Lower lobe of right lung (tissue), 2 donors: ENCODE measurements at regions of chr4 and their contacts with region 1.

Region 1: DNA sequence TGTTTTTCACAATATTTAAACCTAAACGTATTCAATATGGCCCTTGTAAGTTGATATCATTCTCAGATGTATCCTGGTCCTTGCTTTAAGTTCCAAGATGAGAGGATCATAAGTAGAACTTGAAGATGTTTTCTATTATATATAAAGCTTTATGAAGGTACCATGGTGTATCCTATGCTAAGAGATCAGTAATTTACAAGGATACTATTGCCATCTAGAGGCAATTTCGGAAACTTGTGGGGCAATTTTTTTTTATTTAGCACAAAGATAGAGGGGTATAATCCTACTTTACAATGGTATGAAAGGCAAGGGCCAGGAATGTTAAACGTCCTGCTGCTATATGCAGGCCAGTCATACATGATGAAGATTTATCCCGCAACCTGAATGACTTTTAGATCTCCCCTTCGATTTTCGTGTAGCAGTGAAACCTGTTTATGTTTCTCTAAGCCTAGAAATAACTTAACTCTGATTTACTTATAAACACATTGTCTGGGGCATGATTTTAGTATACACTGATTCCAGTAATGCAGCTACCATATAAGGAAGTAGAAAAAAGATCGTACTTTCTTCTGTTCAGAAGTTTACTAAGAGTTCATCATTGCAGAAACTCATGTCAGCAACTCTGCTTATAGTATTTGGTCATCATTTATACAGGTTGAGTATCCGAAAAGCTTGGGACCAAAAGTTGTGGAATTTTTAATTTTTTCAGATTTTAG is 2.6 kb downstream of the SLC25A31 start:
- DNase-seq: no peak
- ATAC-seq: no peak
- H3K4me3 ChIP-seq: no peak overlapping the region
- H3K27ac ChIP-seq: no peak overlapping the region
- H3K4me1 ChIP-seq: no peaks in the 10 kb centered on the region
- H3K27me3 ChIP-seq: no peaks in the 10 kb centered on the region
- CTCF ChIP-seq: peak; percentile 60

Region 2: GRCh38 chr4:127604949-127605709 is 127.6 kb before region 1 on chr4:
- intact Hi-C with region 1: loop called (anchors 5 kb)
- DNase-seq: no peak
- ATAC-seq: no peak
- H3K4me3 ChIP-seq: no peak overlapping the region
- H3K27ac ChIP-seq: no peak overlapping the region
- H3K4me1 ChIP-seq: no peaks in the 10 kb centered on the region
- H3K27me3 ChIP-seq: peaks cover 4% of the 10 kb centered on the region
- CTCF ChIP-seq: peak; percentile 50

Region 3: DNA sequence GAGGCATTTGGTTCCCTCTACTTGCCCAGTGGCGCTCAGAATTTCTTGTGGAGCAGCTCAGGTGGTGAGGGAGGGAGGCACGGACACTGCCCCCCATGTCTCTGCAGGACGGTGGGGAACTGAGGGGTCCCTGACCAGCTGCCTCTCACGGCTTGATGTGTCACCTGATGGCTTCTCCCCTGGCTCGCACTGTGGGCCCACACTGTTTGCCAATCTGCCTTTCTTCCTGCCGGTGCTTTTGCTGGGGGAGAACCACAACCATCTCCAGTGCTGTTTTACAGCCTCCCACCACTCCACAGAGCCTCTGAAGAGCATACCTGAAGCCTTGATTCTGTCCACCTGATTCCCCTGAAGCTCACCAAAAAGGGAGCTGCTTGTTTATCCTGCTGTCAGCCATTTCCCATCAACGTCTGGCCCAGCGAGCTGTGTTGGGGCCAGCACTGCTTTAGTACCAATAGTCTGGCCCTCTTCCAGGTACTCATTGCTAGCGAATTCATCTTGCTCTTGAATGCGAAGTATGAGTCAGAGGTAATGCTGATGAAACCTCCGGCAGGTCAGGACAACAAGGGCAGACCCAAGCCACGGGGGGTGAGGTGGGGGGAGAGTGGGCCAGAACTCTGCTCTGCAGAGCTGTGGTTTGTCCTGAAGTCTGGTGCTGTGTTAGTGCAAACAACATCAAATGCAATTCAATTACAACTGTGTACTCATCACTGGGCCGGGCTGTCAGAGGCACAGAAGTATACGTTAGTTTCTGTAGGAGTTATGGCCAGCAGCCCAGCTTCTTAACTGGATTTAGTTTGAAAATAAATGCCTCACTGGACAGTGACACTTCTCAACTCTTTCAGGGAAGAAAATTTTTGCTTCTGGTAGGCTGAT is 868.5 kb after region 1 on chr4:
- intact Hi-C with region 1: no loop called
- DNase-seq: peak; percentile 72
- ATAC-seq: peak; percentile 92 to 93
- H3K4me3 ChIP-seq: no peak overlapping the region
- H3K27ac ChIP-seq: peak overlapping the region; percentile 67
- H3K4me1 ChIP-seq: peaks cover 27% of the 10 kb centered on the region
- H3K27me3 ChIP-seq: no peaks in the 10 kb centered on the region
- CTCF ChIP-seq: no peak